ENCODE measurements at regions of chr14 and their contacts with region 1.

Region 1: GRCh38 chr14:45253068-45253753 is at the start of gene MIS18BP1:
- DNase-seq: peak; percentile 98 to 99 (median 99)
- H3K4me3 ChIP-seq: peak within 1 kb of the TSS; percentile 84 to 99 (median 91)
- H3K27ac ChIP-seq: peak within 1 kb of the TSS; percentile 82 to 91
- H3K4me1 ChIP-seq: peaks cover 25 to 38% (median 35%) of the 10 kb centered on the region in 4 experiments
- H3K27me3 ChIP-seq: no peaks in the 10 kb centered on the region

Region 2: DNA sequence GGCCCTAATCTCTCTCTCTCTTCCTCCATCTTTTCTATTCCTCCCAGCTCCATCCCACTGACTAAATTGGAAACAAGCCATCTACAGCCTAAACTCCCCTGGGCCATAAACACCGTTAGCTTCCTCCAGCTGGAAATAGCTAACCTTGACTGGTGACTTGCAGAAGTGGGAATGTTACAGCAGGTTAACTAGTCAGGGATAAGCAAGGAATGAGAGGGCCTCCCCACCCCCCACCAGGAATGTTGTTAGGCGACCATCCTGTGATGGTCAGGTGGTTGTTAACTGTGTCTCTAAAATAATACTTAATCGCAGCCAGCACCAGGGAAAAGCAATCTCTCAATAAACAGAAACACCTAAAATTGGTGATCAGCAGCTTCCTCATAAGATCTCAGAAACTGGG is 41.0 kb before region 1 on chr14:
- CTCF ChIA-PET with region 1: no interaction called
- POLR2A ChIA-PET with region 1: no interaction called
- DNase-seq: no peak
- H3K4me3 ChIP-seq: no peak overlapping the region
- H3K27ac ChIP-seq: no peak overlapping the region
- H3K4me1 ChIP-seq: no peaks in the 10 kb centered on the region
- H3K27me3 ChIP-seq: no peaks in the 10 kb centered on the region

Region 3: GRCh38 chr14:45267071-45267470 is 13.9 kb after region 1 on chr14:
- CTCF ChIA-PET with region 1: interaction called, 104 read pairs
- POLR2A ChIA-PET with region 1: interaction called, 3 read pairs
- DNase-seq: no peak
- H3K4me3 ChIP-seq: no peak overlapping the region
- H3K27ac ChIP-seq: no peak overlapping the region
- H3K4me1 ChIP-seq: no peaks in the 10 kb centered on the region
- H3K27me3 ChIP-seq: no peaks in the 10 kb centered on the region

Measured in common myeloid progenitor, CD34-positive (primary cell).